GM12878 (cell line): ENCODE measurements at regions of chr22 and their contacts with region 1.

Region 1: GRCh38 chr22:37862570-37863325 is 13.5 kb downstream of the EIF3L start:
- DNase-seq: no peak
- ATAC-seq: no peak
- H3K4me3 ChIP-seq: no peak overlapping the region
- H3K27ac ChIP-seq: no peak overlapping the region
- H3K4me1 ChIP-seq: no peaks in the 10 kb centered on the region
- H3K27me3 ChIP-seq: no peaks in the 10 kb centered on the region
- CTCF ChIP-seq: no peak
- EP300 ChIP-seq: no peak
- POLR2A ChIP-seq: no peak
- RAD21 ChIP-seq: no peak

Region 2: DNA sequence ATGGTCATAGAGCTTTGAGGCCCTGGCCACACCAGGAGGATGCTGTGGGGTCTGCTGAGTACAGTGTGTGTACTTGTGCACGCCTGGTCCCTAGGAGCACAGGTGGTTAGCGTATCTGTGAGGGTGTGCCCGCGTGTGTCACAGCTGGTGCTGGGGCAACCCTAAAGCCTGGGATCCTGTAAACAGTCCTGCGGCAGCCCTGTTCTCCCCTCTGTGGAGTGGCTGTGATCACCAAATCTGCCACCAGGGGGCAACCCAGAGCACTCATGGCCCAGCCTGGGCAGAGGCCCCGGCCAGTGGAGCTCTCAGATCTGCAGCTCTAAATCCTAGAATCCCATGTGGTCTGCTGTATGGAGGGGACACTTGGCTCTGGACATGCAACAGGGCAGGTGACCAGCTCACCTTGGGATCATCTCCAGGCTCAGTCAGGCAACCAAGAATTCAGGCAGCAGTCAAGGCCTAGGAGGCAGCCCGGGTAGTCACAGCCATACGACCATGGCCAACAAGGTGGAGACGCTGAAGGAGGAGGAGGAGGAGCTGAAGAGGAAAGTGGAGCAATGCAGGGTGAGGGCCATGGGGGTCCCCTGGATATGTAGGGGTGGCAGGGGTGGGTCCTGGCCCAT is 219.4 kb before region 1 on chr22:
- CTCF ChIA-PET with region 1: interaction called, 13 read pairs
- POLR2A ChIA-PET with region 1: no interaction called
- RAD21 ChIA-PET with region 1: interaction called, 6 read pairs
- SMC1A ChIA-PET with region 1: no interaction called
- in situ Hi-C with region 1: no loop called
- intact Hi-C with region 1: no loop called
- DNase-seq: no peak
- ATAC-seq: peak; percentile 79
- H3K4me3 ChIP-seq: no peak overlapping the region
- H3K27ac ChIP-seq: no peak overlapping the region
- H3K4me1 ChIP-seq: peaks cover 28% of the 10 kb centered on the region
- H3K27me3 ChIP-seq: no peaks in the 10 kb centered on the region
- CTCF ChIP-seq: peak; percentile 86 to 92 (median 89)
- EP300 ChIP-seq: no peak
- POLR2A ChIP-seq: no peak
- RAD21 ChIP-seq: peak; percentile 62

Region 3: GRCh38 chr22:37817705-37818408 is 44.9 kb before region 1 on chr22:
- CTCF ChIA-PET with region 1: interaction called, 121 read pairs
- POLR2A ChIA-PET with region 1: interaction called, 3 read pairs
- RAD21 ChIA-PET with region 1: interaction called, 18 read pairs
- SMC1A ChIA-PET with region 1: interaction called, 53 read pairs
- in situ Hi-C with region 1: loop called (anchors 5 kb)
- intact Hi-C with region 1: loop called (anchors 1 kb)
- DNase-seq: no peak
- ATAC-seq: peak; percentile 96
- H3K4me3 ChIP-seq: peak overlapping the region; percentile 37; the same call in 1 of the 2 replicates
- H3K27ac ChIP-seq: no peak overlapping the region
- H3K4me1 ChIP-seq: peaks cover 10% of the 10 kb centered on the region
- H3K27me3 ChIP-seq: peaks cover 0 to 2% of the 10 kb centered on the region in 2 experiments; a peak in 2 of 4 replicates
- CTCF ChIP-seq: peak; percentile 90 to 97 (median 92)
- EP300 ChIP-seq: no peak
- POLR2A ChIP-seq: peak; percentile 38; the same call in 1 of the 2 replicates
- RAD21 ChIP-seq: peak; percentile 82

Region 4: DNA sequence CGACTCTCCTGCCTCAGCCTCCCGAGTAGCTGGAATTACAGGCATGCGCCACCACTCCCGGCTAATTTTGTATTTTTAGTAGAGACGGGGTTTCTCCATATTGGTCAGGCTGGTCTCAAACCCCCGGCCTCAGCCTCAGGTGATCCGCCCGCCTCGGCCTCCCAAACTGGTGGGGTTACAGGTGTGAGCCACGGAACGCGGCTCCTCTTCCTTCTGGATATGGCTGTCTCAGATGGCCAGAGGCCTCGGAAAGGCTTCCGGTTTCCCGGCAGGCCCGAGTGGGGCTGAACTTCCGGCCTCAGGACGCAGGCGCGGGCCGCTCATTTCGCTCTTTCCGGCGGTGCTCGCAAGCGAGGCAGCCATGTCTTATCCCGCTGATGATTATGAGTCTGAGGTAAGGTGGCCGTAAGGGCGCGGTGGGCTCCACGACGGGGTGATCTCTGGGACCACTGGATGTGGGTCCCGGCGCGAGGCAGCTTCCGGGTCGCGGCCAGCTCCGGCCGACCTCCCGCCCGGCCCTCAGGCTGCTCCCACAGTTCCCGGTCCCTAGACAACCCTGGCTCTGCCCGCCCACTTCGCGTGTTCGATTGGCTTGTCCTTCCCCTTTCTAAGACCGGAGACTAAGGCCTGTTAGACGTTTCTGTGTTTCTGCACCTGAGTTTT is 13.5 kb before region 1 on chr22 and contains the start of gene EIF3L:
- CTCF ChIA-PET with region 1: interaction called, 32 read pairs
- POLR2A ChIA-PET with region 1: no interaction called
- RAD21 ChIA-PET with region 1: interaction called, 5 read pairs
- SMC1A ChIA-PET with region 1: interaction called, 12 read pairs
- in situ Hi-C with region 1: no loop called
- intact Hi-C with region 1: no loop called
- DNase-seq: peak; percentile 51
- ATAC-seq: peak; percentile 90
- H3K4me3 ChIP-seq: peak within 1 kb of the TSS; percentile 90
- H3K27ac ChIP-seq: peak within 1 kb of the TSS; percentile 81
- H3K4me1 ChIP-seq: peaks cover 3% of the 10 kb centered on the region; the same call in 1 of the 2 replicates
- H3K27me3 ChIP-seq: no peaks in the 10 kb centered on the region
- CTCF ChIP-seq: no peak
- EP300 ChIP-seq: no peak
- POLR2A ChIP-seq: peak; percentile 91
- RAD21 ChIP-seq: no peak
- polyA plus RNA-seq, gene EIF3L: 521 to 732 TPM

Region 5: GRCh38 chr22:37896181-37896592 is 33.4 kb after region 1 on chr22:
- CTCF ChIA-PET with region 1: interaction called, 18 read pairs
- POLR2A ChIA-PET with region 1: interaction called, 4 read pairs
- RAD21 ChIA-PET with region 1: interaction called, 3 read pairs
- SMC1A ChIA-PET with region 1: interaction called, 5 read pairs
- in situ Hi-C with region 1: no loop called
- intact Hi-C with region 1: no loop called
- DNase-seq: peak; percentile 60
- ATAC-seq: peak; percentile 98
- H3K4me3 ChIP-seq: no peak overlapping the region
- H3K27ac ChIP-seq: peak overlapping the region; percentile 89
- H3K4me1 ChIP-seq: peaks cover 11% of the 10 kb centered on the region
- H3K27me3 ChIP-seq: no peaks in the 10 kb centered on the region
- CTCF ChIP-seq: no peak
- EP300 ChIP-seq: no peak
- POLR2A ChIP-seq: peak; percentile 70
- RAD21 ChIP-seq: no peak

Region 6: DNA sequence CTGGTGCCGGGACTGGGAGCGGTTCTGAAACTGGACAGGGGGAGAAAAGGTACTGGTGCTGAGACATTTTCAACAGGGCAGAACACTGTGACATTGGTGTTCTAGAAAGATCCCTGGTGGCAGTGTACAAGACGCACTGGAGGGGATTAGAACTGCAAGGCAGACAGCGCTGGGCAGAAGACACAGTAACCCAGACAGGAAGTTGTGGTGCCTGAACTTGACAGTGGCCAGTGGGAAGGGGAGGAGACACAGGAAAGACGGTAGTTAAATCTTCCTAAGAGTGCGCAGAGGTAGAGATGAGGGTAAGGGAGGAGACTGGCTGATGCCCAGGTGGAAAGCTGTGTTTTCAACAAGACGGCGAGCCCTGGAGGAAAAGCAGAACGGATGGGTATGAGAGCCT is 769.0 kb after region 1 on chr22:
- CTCF ChIA-PET with region 1: no interaction called
- POLR2A ChIA-PET with region 1: no interaction called
- RAD21 ChIA-PET with region 1: no interaction called
- SMC1A ChIA-PET with region 1: no interaction called
- in situ Hi-C with region 1: no loop called
- intact Hi-C with region 1: no loop called
- DNase-seq: no peak
- ATAC-seq: no peak
- H3K4me3 ChIP-seq: no peak overlapping the region
- H3K27ac ChIP-seq: no peak overlapping the region
- H3K4me1 ChIP-seq: no peaks in the 10 kb centered on the region
- H3K27me3 ChIP-seq: peaks cover 0 to 3% of the 10 kb centered on the region in 2 experiments; a peak in 2 of 4 replicates
- CTCF ChIP-seq: no peak
- EP300 ChIP-seq: no peak
- POLR2A ChIP-seq: no peak
- RAD21 ChIP-seq: no peak